ENCODE measurements at regions of chr12 and their contacts with region 1.

Region 1: DNA sequence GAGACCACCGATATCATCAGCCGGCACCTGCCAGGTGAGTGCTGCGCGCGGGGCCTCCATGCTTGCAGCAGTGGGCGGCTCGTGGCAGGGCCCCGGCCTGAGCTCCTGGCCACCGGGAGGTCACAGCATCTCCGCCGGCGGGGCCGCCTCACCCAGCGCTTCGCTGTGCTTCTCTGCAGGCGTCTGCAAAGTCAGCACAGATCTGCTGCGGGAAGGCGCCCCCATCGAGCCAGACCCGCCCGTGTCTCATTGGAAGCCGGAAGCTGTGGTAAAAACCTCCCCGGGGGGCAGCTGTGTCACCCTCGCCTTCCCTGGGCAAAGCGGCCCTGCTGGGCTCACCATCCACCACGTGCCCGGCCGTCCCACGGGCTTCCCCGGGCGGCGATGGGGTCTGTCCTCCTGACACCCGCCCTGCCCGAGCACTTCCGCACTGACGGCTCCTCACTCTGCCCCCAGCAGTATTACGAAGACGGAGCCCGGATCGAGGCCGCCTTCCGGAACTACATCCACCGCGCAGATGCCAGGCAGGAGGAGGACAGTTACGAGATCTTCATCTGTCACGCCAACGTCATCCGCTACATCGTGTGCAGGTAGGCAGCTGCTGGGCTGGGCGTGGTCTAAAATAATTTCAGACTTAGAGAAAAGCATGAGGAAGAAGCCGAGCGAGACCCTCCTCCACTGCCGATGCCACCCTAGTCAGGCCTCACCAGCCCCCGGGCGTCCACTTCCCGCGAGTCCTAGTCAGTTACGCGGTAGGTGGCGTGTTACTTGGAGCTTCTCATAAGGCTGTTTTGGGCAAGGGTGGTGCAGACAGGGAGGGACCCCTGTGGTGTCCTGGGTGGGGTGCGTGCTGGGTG is 7.1 kb downstream of the PGAM5 start:
- DNase-seq: peak in 1 of 2 experiments; percentile 58
- H3K4me3 ChIP-seq: no peak overlapping the region
- H3K27ac ChIP-seq: no peak overlapping the region
- H3K4me1 ChIP-seq: no peaks in the 10 kb centered on the region
- H3K27me3 ChIP-seq: no peaks in the 10 kb centered on the region; a peak in 1 of 7 replicates
- CTCF ChIP-seq: no peak
- EP300 ChIP-seq: no peak
- POLR2A ChIP-seq: no peak
- RAD21 ChIP-seq: no peak

Region 2: GRCh38 chr12:132729541-132730320 is 12.0 kb after region 1 on chr12:
- CTCF ChIA-PET with region 1: interaction called, 3 read pairs
- POLR2A ChIA-PET with region 1: interaction called, 17 read pairs
- DNase-seq: no peak
- H3K4me3 ChIP-seq: no peak overlapping the region
- H3K27ac ChIP-seq: no peak overlapping the region
- H3K4me1 ChIP-seq: no peaks in the 10 kb centered on the region; a peak in 1 of 7 replicates
- H3K27me3 ChIP-seq: no peaks in the 10 kb centered on the region
- CTCF ChIP-seq: no peak
- EP300 ChIP-seq: no peak
- POLR2A ChIP-seq: no peak
- RAD21 ChIP-seq: no peak